Stomach (tissue), 19 donors: ENCODE measurements at regions of chr15 and their contacts with region 1.

Region 1: GRCh38 chr15:48861813-48862431 is 16.0 kb upstream of the EID1 start:
- DNase-seq: peak in 1 of 2 donors; percentile 86
- H3K4me3 ChIP-seq: no peak overlapping the region
- H3K27ac ChIP-seq: no peak overlapping the region
- H3K4me1 ChIP-seq: peaks cover 0 to 7% (median 2%) of the 10 kb centered on the region in 4 donors
- H3K27me3 ChIP-seq: no peaks in the 10 kb centered on the region
- CTCF ChIP-seq: peak in 5 of 7 experiments; percentile 67 to 84 (median 78)
- EP300 ChIP-seq: no peak
- POLR2A ChIP-seq: no peak

Region 2: DNA sequence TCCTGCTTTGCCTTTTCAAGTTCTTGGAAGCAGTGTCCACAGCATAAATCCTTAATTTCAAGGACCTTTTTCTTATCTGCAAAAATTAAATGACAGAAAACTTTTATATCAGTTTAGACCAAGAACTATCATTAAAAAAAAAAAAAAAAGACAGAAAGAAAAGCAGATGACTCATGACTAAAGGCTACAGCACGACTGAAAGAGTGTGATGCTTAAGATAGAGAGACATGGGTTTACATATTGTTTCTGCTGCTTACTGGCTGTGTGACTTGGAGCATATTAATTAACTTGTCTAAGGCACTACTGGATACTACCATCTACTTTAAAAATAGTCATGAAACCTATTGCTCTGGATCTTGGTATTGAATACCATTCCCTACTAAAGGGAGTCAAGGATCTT is 113.4 kb before region 1 on chr15:
- intact Hi-C with region 1: no loop called
- DNase-seq: no peak
- H3K4me3 ChIP-seq: no peak overlapping the region
- H3K27ac ChIP-seq: no peak overlapping the region
- H3K4me1 ChIP-seq: no peaks in the 10 kb centered on the region
- H3K27me3 ChIP-seq: no peaks in the 10 kb centered on the region
- CTCF ChIP-seq: no peak
- EP300 ChIP-seq: no peak
- POLR2A ChIP-seq: no peak

Region 3: GRCh38 chr15:48800811-48801455 is 61.0 kb before region 1 on chr15:
- intact Hi-C with region 1: no loop called
- DNase-seq: peak in 1 of 2 donors; percentile 61
- H3K4me3 ChIP-seq: no peak overlapping the region
- H3K27ac ChIP-seq: no peak overlapping the region
- H3K4me1 ChIP-seq: peaks cover 0 to 7% (median 0%) of the 10 kb centered on the region in 4 donors
- H3K27me3 ChIP-seq: no peaks in the 10 kb centered on the region
- CTCF ChIP-seq: peak in 3 of 7 experiments; percentile 31 to 46 (median 33)
- EP300 ChIP-seq: no peak
- POLR2A ChIP-seq: no peak

Region 4: GRCh38 chr15:49438962-49439631 is 577.2 kb after region 1 on chr15:
- intact Hi-C with region 1: loop called (anchors 10 kb)
- DNase-seq: peak in 1 of 2 donors; percentile 53
- H3K4me3 ChIP-seq: no peak overlapping the region
- H3K27ac ChIP-seq: peak overlapping the region in 4 of 5 donors; percentile 24 to 62 (median 32)
- H3K4me1 ChIP-seq: peaks cover 0 to 36% (median 18%) of the 10 kb centered on the region in 4 donors
- H3K27me3 ChIP-seq: no peaks in the 10 kb centered on the region
- CTCF ChIP-seq: no peak
- EP300 ChIP-seq: no peak
- POLR2A ChIP-seq: no peak

Region 5: GRCh38 chr15:50145451-50145872 is 1283.5 kb after region 1 on chr15:
- intact Hi-C with region 1: loop called (anchors 10 kb)
- DNase-seq: peak in 1 of 2 donors; percentile 89
- H3K4me3 ChIP-seq: no peak overlapping the region
- H3K27ac ChIP-seq: no peak overlapping the region
- H3K4me1 ChIP-seq: peaks cover 0 to 8% (median 0%) of the 10 kb centered on the region in 4 donors
- H3K27me3 ChIP-seq: no peaks in the 10 kb centered on the region
- CTCF ChIP-seq: peak in 5 of 7 experiments; percentile 22 to 65 (median 46)
- EP300 ChIP-seq: no peak
- POLR2A ChIP-seq: no peak